Activated naive CD4-positive, alpha-beta T cell treated with anti-CD3 and anti-CD28 coated beads for 36 hours (primary cell): ENCODE measurements at regions of chr2 and their contacts with region 1.

Region 1: DNA sequence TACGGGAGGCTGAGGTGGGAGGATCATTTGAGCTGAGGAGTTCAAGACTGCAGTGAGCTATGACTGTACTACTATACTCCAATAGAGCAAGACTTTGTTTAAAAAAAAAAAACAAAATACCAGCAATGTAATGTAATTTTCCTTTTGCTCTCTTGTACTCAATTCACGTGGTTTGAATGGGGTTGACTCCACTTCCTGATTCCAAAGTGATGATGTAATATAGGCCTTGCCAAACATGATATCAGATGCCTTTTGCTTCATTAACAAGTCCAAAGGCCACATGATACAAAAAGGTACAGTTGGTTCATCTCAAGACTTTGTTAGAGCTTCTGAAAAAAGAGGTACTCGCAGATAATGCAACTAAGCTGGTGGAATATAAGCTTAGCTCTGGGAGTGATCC is 321.8 kb downstream of the ZEB2 start:
- DNase-seq: peak; percentile 17
- H3K4me3 Mint-ChIP-seq: no peak overlapping the region
- H3K27ac Mint-ChIP-seq: peak overlapping the region; percentile 86
- H3K4me1 Mint-ChIP-seq: peaks cover 65% of the 10 kb centered on the region
- H3K27me3 Mint-ChIP-seq: no peaks in the 10 kb centered on the region

Region 2: DNA sequence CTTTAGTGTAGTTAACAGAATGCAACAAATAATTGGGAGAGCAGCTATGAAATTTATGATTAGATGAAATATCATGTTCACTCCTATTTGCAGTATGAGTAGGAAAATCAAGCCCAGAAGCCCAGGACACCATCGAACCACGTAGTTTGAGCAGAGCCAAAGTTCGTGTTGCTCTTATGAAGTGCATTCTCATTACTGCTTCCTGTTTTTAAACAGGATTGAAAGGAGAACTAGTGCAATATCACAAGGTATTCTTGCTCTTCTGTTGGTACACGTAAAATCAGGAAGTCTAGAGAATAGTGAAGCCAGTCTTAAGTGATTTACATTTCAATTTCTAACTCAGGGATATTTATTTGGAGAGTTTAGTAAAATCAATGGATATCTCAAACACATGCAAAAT is 1047.8 kb before region 1 on chr2:
- CTCF ChIA-PET with region 1: no interaction called
- intact Hi-C with region 1: loop called (anchors 5 kb)
- DNase-seq: peak; percentile 33
- H3K4me3 Mint-ChIP-seq: peak overlapping the region; percentile 52
- H3K27ac Mint-ChIP-seq: peak overlapping the region; percentile 91
- H3K4me1 Mint-ChIP-seq: peaks cover 80% of the 10 kb centered on the region
- H3K27me3 Mint-ChIP-seq: no peaks in the 10 kb centered on the region

Region 3: DNA sequence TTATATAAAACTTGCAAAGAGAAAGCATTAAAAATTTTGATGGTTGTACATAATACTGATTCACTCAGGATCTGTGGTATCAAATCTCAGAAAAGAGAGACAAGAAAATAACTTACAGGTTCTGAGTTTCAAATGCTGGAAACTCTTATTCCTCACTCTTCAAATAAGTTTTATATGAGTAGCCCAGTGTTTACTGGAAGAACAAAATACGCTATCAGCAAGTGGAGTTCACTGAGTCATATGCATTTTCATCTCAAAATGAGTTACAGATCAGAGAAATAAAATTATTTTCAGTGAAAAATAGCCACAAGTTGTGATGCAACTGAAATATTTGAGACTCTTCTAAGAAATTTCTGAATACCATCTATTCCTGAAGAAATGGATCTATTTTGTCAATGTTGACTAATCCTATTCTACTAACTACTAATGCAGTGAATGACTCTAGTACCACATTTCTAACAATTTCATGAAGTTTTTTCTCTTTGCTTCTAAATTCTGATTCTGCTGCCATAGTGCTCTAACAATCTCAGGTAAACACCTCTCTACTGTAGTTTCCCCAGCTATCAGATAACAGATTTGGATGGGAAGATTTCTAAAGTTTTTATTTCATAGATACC is 69.9 kb before region 1 on chr2:
- CTCF ChIA-PET with region 1: no interaction called
- intact Hi-C with region 1: loop called (anchors 2 kb)
- DNase-seq: no peak
- H3K4me3 Mint-ChIP-seq: no peak overlapping the region
- H3K27ac Mint-ChIP-seq: peak overlapping the region; percentile 37
- H3K4me1 Mint-ChIP-seq: peaks cover 25% of the 10 kb centered on the region
- H3K27me3 Mint-ChIP-seq: no peaks in the 10 kb centered on the region

Region 4: GRCh38 chr2:144170179-144170815 is 27.8 kb before region 1 on chr2:
- CTCF ChIA-PET with region 1: no interaction called
- intact Hi-C with region 1: no loop called
- DNase-seq: no peak
- H3K4me3 Mint-ChIP-seq: no peak overlapping the region
- H3K27ac Mint-ChIP-seq: no peak overlapping the region
- H3K4me1 Mint-ChIP-seq: no peaks in the 10 kb centered on the region
- H3K27me3 Mint-ChIP-seq: no peaks in the 10 kb centered on the region

Region 5: DNA sequence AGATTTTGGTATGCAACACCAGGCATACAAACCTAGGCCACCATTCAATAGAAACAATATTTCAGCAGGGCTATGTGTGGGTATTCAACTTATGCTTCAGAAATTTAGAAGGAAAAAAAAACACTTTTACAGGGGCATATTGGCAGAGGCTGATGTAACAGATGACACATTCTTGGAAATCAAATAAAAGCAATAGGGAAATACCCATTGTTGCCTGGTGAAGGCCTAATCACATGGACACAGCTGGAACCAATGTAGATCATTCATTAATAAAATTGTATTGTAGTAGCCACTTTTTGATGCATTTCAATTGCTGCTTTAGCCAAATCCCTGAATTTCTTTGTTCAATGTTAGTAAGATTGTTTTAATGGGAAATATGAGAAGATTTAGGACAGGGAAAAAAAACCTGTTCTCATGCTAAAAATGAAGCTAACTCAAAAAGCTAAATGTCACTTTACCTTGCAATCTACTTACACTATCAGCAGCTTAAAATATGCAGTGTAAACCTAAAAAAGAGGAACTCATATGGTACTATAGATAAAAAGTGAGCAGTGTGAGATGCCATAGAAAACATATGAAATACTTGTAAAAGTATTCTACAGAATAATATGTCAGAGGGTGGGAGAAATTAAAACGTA is 32.5 kb after region 1 on chr2:
- CTCF ChIA-PET with region 1: no interaction called
- intact Hi-C with region 1: loop called (anchors 1 kb)
- DNase-seq: peak; percentile 7
- H3K4me3 Mint-ChIP-seq: no peak overlapping the region
- H3K27ac Mint-ChIP-seq: peak overlapping the region; percentile 64
- H3K4me1 Mint-ChIP-seq: peaks cover 23% of the 10 kb centered on the region
- H3K27me3 Mint-ChIP-seq: no peaks in the 10 kb centered on the region

Region 6: DNA sequence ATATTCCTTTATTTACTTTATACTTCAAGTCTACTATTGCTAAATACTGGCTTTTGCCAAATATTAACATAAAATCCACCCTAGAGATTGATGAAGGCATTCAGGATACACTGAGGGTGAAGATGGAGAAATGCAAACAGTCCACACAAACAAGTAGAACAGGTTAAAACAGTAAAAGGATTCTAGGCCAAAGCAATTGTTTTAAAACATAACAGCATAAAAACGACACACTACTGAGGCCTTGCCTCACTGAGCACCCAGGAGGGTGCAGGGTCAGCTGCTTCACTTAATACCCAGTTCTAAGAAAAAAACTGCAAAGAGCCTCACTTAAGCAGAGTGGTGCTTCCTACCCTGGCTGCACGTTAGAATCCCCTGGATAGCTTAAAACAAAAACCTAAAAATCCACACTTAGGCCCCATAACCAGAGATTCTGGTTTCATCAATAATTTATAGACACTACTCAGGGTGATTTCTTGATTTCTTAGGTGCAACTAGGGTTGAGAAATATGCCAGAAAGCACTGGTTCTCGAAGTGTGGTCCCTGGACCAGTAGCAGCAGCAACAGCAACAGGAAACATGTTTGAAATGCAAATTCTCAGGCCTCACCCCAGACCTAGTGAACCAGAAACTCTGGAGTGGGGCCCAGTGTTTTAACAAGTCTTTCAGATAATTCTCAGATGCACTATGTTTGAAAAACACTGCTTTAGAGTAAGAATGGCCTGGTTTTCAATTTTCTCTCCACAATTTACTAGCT is 42.6 kb after region 1 on chr2:
- CTCF ChIA-PET with region 1: no interaction called
- intact Hi-C with region 1: no loop called
- DNase-seq: no peak
- H3K4me3 Mint-ChIP-seq: no peak overlapping the region
- H3K27ac Mint-ChIP-seq: no peak overlapping the region
- H3K4me1 Mint-ChIP-seq: peaks cover 19% of the 10 kb centered on the region
- H3K27me3 Mint-ChIP-seq: no peaks in the 10 kb centered on the region

Region 7: DNA sequence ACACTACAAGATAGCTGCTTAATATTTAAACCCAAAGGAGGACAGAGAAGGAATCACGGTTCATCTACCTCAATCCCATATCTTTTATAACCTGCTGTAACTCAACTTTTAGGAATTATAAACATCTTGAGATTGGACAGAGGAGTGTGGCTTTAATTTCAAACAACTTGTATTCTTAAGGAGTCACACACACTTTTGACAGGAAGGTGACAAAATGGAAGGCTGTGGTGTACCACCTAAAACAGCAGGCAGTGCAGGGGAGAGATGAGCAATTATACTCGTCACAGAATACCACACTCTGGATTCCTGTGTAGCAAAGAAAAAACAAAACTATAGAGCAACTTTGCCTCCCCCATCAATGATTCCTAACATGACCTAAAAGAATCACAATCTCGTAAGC is 127.0 kb after region 1 on chr2:
- CTCF ChIA-PET with region 1: no interaction called
- intact Hi-C with region 1: loop called (anchors 1 kb)
- DNase-seq: peak; percentile 70
- H3K4me3 Mint-ChIP-seq: peak overlapping the region; percentile 12
- H3K27ac Mint-ChIP-seq: peak overlapping the region; percentile 83
- H3K4me1 Mint-ChIP-seq: peaks cover 63% of the 10 kb centered on the region
- H3K27me3 Mint-ChIP-seq: no peaks in the 10 kb centered on the region

Region 8: DNA sequence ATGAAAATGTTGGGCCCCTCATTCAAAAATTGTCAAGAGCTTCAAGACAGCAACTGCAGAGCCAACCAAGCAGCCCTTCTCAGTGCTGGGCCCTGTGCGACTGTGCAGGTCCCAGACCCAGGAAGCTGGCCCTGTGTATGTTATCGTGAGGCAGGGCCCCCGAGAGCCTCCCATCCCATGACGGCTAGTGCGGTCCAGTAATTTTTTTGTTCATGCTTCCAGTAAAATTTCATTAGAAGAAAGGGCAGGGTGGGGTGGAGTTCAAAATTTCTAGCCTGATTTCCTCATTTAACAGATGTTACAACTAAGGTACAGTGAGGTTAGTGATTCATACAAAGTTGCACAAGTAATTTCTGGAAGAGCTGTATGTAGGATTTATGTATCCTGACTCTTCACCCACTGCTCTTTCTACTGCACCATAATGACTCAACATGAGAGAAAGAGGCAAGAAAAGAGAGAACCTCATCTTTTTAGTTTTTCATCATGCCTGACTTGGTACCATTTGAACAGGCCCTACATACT is 216.3 kb after region 1 on chr2:
- CTCF ChIA-PET with region 1: no interaction called
- intact Hi-C with region 1: loop called (anchors 5 kb)
- DNase-seq: peak; percentile 10
- H3K4me3 Mint-ChIP-seq: no peak overlapping the region
- H3K27ac Mint-ChIP-seq: no peak overlapping the region
- H3K4me1 Mint-ChIP-seq: peaks cover 17% of the 10 kb centered on the region
- H3K27me3 Mint-ChIP-seq: peaks cover 5% of the 10 kb centered on the region